ENCODE measurements at regions of chr12 and their contacts with region 1.

Region 1: DNA sequence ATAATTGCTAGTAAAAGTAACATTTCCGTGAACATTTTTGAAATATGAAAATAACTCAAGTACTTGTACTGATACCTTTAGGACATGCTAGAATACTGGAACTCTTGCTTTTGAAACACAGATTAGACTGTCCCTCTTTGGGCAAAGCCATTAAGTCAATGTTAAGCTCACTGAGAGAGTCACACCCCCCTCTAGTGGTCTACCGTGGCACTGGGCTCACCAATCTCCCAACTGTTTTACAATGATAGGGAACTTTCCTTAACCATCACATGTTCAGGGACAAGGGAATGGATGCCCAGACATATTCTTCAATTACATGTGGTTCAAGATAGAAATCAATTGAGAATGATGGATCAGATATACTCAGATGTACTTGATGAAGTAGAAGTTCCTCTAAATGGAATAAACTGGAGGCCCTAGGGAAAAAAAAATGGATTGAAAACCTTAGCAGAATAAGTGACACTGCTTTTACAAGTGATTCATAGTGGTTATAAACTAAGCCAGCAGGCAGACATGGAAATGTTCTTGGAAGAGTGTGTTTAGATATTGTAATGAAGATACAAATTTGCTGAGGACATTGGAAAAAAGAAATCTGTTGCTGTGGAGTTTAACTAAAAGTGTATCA is 17.8 kb downstream of the NANOG start:
- DNase-seq: peak; percentile 89
- ATAC-seq: peak; percentile 77
- H3K4me3 Mint-ChIP-seq: no peak overlapping the region
- H3K27ac Mint-ChIP-seq: peak overlapping the region; percentile 43
- H3K4me1 Mint-ChIP-seq: peaks cover 17% of the 10 kb centered on the region
- H3K27me3 Mint-ChIP-seq: no peaks in the 10 kb centered on the region
- CTCF ChIP-seq: peak; percentile 84

Region 2: DNA sequence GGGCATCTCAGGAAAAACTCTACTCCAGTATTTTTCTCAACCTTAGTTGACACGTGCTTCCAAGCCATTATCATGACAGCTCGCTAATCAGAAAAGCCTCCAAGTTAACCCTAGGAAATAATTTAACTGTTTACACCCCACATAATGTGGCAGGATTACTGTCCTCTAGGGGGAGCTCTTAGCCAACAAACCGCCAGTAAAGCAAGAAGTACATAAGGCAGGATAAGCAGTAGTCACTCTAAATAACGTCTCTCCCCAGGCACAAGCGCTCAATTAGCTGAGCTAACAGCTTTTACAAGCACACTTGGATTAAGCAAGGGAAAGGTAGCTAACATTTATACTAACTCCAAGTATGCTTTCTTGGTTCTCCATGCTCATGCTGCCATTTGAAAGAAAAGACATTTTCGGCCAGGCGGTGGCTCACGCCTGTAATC is 164.1 kb before region 1 on chr12:
- CTCF ChIA-PET with region 1: interaction called, 12 read pairs
- POLR2A ChIA-PET with region 1: no interaction called
- DNase-seq: peak; percentile 45
- ATAC-seq: no peak
- H3K4me3 Mint-ChIP-seq: no peak overlapping the region
- H3K27ac Mint-ChIP-seq: peak overlapping the region; percentile 2; the same call in 1 of the 2 replicates
- H3K4me1 Mint-ChIP-seq: peaks cover 64% of the 10 kb centered on the region
- H3K27me3 Mint-ChIP-seq: no peaks in the 10 kb centered on the region
- CTCF ChIP-seq: peak; percentile 89

Region 3: GRCh38 chr12:7678738-7679137 is 128.2 kb before region 1 on chr12:
- CTCF ChIA-PET with region 1: interaction called, 31 read pairs
- POLR2A ChIA-PET with region 1: interaction called, 6 read pairs
- DNase-seq: no peak
- ATAC-seq: no peak
- H3K4me3 Mint-ChIP-seq: no peak overlapping the region
- H3K27ac Mint-ChIP-seq: no peak overlapping the region
- H3K4me1 Mint-ChIP-seq: peaks cover 34% of the 10 kb centered on the region
- H3K27me3 Mint-ChIP-seq: no peaks in the 10 kb centered on the region
- CTCF ChIP-seq: no peak

Region 4: GRCh38 chr12:7695237-7696197 is 111.5 kb before region 1 on chr12 and contains the start of gene GDF3:
- CTCF ChIA-PET with region 1: interaction called, 10 read pairs
- POLR2A ChIA-PET with region 1: no interaction called
- DNase-seq: no peak
- ATAC-seq: peak; percentile 26
- H3K4me3 Mint-ChIP-seq: peak within 1 kb of the TSS; percentile 40
- H3K27ac Mint-ChIP-seq: peak within 1 kb of the TSS; percentile 94
- H3K4me1 Mint-ChIP-seq: peaks cover 47% of the 10 kb centered on the region
- H3K27me3 Mint-ChIP-seq: no peaks in the 10 kb centered on the region
- CTCF ChIP-seq: no peak
- total RNA-seq, gene GDF3: 34.4 to 42.0 TPM (median 38.2 TPM) in 3 replicates

Region 5: GRCh38 chr12:7716381-7716780 is 90.6 kb before region 1 on chr12:
- CTCF ChIA-PET with region 1: interaction called, 37 read pairs
- POLR2A ChIA-PET with region 1: interaction called, 4 read pairs
- DNase-seq: no peak
- ATAC-seq: peak; percentile 85
- H3K4me3 Mint-ChIP-seq: no peak overlapping the region
- H3K27ac Mint-ChIP-seq: no peak overlapping the region
- H3K4me1 Mint-ChIP-seq: peaks cover 36% of the 10 kb centered on the region
- H3K27me3 Mint-ChIP-seq: no peaks in the 10 kb centered on the region
- CTCF ChIP-seq: no peak

Region 6: DNA sequence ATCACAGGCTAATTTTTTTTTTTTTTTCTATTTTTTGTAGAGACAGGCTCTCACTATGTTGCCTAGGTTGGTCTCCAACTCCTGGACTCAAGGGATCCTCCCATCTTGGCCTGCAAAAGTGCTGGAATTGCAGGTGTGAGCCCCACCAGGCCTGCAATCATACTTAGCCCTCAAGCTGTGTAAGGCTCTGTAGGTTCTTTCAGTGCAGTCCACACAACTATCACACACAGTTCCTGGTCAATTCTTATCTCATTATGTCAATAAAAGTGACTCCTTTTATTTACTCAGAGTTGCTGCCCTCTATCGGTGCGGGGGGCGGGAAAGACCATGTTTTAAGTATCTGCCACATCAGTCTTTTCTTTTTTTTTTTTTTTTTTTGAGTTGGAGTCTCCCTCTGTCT is 100.0 kb after region 1 on chr12:
- CTCF ChIA-PET with region 1: no interaction called
- POLR2A ChIA-PET with region 1: no interaction called
- DNase-seq: peak; percentile 72
- ATAC-seq: peak; percentile 31
- H3K4me3 Mint-ChIP-seq: peak overlapping the region; percentile 30
- H3K27ac Mint-ChIP-seq: peak overlapping the region; percentile 100
- H3K4me1 Mint-ChIP-seq: peaks cover 47% of the 10 kb centered on the region
- H3K27me3 Mint-ChIP-seq: no peaks in the 10 kb centered on the region
- CTCF ChIP-seq: no peak